ENCODE measurements at regions of chr7 and their contacts with region 1.

Region 1: GRCh38 chr7:542713-543500 is 23.3 kb upstream of the PDGFA start:
- DNase-seq: peak; percentile 37
- ATAC-seq: peak; percentile 7; the same call in 2 of the 3 replicates
- H3K4me3 ChIP-seq: peak overlapping the region in 1 of 3 experiments; percentile 9; a peak in 1 of 6 replicates
- H3K27ac ChIP-seq: no peak overlapping the region
- H3K4me1 ChIP-seq: peaks cover 52% of the 10 kb centered on the region
- H3K27me3 ChIP-seq: no peaks in the 10 kb centered on the region; a peak in 1 of 5 replicates
- CTCF ChIP-seq: no peak
- EP300 ChIP-seq: no peak
- POLR2A ChIP-seq: no peak
- RAD21 ChIP-seq: no peak

Region 2: GRCh38 chr7:503575-504111 is 39.3 kb before region 1 on chr7:
- CTCF ChIA-PET with region 1: no interaction called
- POLR2A ChIA-PET with region 1: interaction called, 17 read pairs
- in situ Hi-C with region 1: no loop called
- intact Hi-C with region 1: no loop called
- DNase-seq: peak; percentile 94
- ATAC-seq: peak; percentile 98
- H3K4me3 ChIP-seq: peak overlapping the region in 2 of 3 experiments; percentile 7 to 54; a peak in 2 of 6 replicates
- H3K27ac ChIP-seq: no peak overlapping the region
- H3K4me1 ChIP-seq: peaks cover 38% of the 10 kb centered on the region
- H3K27me3 ChIP-seq: no peaks in the 10 kb centered on the region
- CTCF ChIP-seq: no peak
- EP300 ChIP-seq: peak in 1 of 2 experiments; percentile 69; a peak in 2 of 4 replicates
- POLR2A ChIP-seq: no peak
- RAD21 ChIP-seq: 0 out of 2 replicates have a peak, but pooled peaks have one; percentile 20

Region 3: GRCh38 chr7:552868-553635 is 10.1 kb after region 1 on chr7:
- CTCF ChIA-PET with region 1: no interaction called
- POLR2A ChIA-PET with region 1: interaction called, 19 read pairs
- in situ Hi-C with region 1: no loop called
- intact Hi-C with region 1: loop called (anchors 2 kb)
- DNase-seq: peak; percentile 54
- ATAC-seq: peak; percentile 86
- H3K4me3 ChIP-seq: peak overlapping the region in 2 of 3 experiments; percentile 27 to 61; a peak in 4 of 6 replicates
- H3K27ac ChIP-seq: peak overlapping the region; percentile 43
- H3K4me1 ChIP-seq: peaks cover 22% of the 10 kb centered on the region
- H3K27me3 ChIP-seq: no peaks in the 10 kb centered on the region
- CTCF ChIP-seq: no peak
- EP300 ChIP-seq: peak in 1 of 2 experiments; percentile 31; a peak in 1 of 4 replicates
- POLR2A ChIP-seq: 0 out of 4 replicates have a peak, but pooled peaks have one; percentile 30 to 32
- RAD21 ChIP-seq: no peak

Region 4: DNA sequence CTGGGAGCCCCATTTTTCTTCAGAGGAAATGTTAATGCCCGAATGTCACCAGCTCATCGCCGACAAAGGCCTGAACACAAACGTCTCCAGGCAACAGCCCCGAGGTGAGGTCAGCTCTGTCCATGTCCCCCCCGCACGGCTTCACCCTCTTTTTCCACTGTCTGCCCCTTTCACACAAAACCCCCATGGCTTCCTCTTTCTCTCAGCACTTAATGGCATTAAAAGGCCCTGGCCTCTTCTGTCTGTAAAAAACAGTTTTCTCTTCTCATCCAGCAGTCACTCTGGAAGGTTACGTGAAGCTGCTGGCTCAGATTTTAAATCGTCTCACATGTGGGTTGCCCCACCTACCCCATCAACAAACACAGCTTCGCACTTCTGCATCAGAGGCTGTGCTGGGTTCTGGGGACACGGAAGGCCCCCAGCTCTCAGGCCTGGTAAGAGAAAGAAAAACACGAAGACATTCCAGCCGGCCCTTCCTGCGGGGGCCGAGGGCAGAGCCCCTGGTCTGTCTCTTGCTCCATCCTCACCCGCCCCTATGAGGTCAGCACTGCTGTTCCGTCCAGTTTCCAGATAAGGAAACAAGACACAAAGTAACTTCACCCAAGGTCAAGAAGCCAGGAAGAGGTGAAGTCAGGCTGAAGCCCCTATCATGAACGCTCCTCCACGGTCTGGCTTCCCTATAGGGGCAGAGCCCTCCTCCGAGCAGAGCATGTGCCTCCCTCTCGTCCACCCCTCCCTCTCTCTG is 67.8 kb after region 1 on chr7:
- CTCF ChIA-PET with region 1: no interaction called
- POLR2A ChIA-PET with region 1: no interaction called
- in situ Hi-C with region 1: no loop called
- intact Hi-C with region 1: loop called (anchors 10 kb)
- DNase-seq: no peak
- ATAC-seq: no peak
- H3K4me3 ChIP-seq: no peak overlapping the region
- H3K27ac ChIP-seq: no peak overlapping the region
- H3K4me1 ChIP-seq: peaks cover 26% of the 10 kb centered on the region
- H3K27me3 ChIP-seq: no peaks in the 10 kb centered on the region
- CTCF ChIP-seq: no peak
- EP300 ChIP-seq: no peak
- POLR2A ChIP-seq: no peak
- RAD21 ChIP-seq: no peak

Region 5: DNA sequence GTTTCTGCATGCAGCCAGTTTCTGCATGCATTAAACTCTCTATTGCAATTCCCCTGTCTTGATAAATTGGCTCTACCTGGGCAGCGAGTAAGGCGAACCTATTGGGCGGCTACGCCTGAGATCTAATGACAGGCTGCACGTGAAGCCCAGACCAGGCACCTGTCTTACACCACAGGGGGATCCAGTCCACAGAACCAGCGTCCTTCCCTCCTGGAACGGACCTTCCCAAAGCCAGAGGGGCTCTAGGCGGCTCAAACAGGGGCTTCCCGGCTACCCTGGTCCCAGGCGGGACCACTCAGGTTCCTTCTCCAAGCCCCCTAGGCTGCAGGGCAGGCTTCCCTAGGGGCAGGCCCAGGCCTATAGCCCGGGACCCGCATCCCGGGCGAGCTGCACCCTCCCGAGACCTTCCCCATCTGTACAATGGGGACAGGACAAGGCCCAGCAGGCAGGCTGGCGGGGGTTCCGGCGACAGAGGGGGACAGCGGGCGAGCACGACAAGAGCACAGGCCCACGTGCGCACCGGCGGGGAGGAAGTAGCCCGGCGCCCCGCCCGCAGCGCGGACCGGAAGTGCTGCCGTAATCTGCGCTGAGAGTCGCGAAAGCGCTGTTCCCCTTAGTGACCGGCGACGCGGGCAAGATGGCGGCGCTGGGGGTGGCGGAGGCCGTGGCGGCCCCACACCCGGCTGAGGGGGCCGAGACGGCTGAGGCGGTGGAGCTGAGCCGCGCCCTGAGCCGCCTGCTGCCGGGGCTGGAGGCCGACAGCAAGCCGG is 183.4 kb after region 1 on chr7 and contains the start of gene DNAAF5:
- CTCF ChIA-PET with region 1: no interaction called
- POLR2A ChIA-PET with region 1: no interaction called
- in situ Hi-C with region 1: no loop called
- intact Hi-C with region 1: loop called (anchors 1 kb)
- DNase-seq: peak; percentile 79
- ATAC-seq: peak; percentile 86
- H3K4me3 ChIP-seq: peak within 1 kb of the TSS; percentile 80 to 99 (median 81)
- H3K27ac ChIP-seq: peak within 1 kb of the TSS; percentile 68
- H3K4me1 ChIP-seq: peaks cover 50% of the 10 kb centered on the region
- H3K27me3 ChIP-seq: no peaks in the 10 kb centered on the region; a peak in 1 of 5 replicates
- CTCF ChIP-seq: peak; percentile 35; the same call in 1 of the 2 replicates
- EP300 ChIP-seq: no peak
- POLR2A ChIP-seq: peak in 1 of 2 experiments; percentile 53; a peak in 2 of 4 replicates
- RAD21 ChIP-seq: peak; percentile 50; the same call in 1 of the 2 replicates
- total RNA-seq, gene DNAAF5: 21.5 and 24.2 TPM in 2 replicates